Activated naive CD4-positive, alpha-beta T cell treated with anti-CD3 and anti-CD28 coated beads for 36 hours (primary cell): ENCODE measurements at regions of chr1 and their contacts with region 1.

Region 1: GRCh38 chr1:171485375-171486047 is at the start of gene PRRC2C:
- DNase-seq: peak; percentile 96
- H3K4me3 Mint-ChIP-seq: peak within 1 kb of the TSS; percentile 84
- H3K27ac Mint-ChIP-seq: peak within 1 kb of the TSS; percentile 94
- H3K4me1 Mint-ChIP-seq: peaks cover 39% of the 10 kb centered on the region
- H3K27me3 Mint-ChIP-seq: no peaks in the 10 kb centered on the region
- total RNA-seq, gene PRRC2C: 199 to 206 TPM

Region 2: GRCh38 chr1:169893494-169894362 is 1591.8 kb before region 1 on chr1 and contains the start of gene SCYL3:
- CTCF ChIA-PET with region 1: no interaction called
- intact Hi-C with region 1: loop called (anchors 1 kb)
- DNase-seq: peak; percentile 94
- H3K4me3 Mint-ChIP-seq: peak within 1 kb of the TSS; percentile 87
- H3K27ac Mint-ChIP-seq: peak within 1 kb of the TSS; percentile 100
- H3K4me1 Mint-ChIP-seq: peaks cover 34% of the 10 kb centered on the region
- H3K27me3 Mint-ChIP-seq: no peaks in the 10 kb centered on the region
- total RNA-seq, gene SCYL3: 8.8 TPM

Region 3: DNA sequence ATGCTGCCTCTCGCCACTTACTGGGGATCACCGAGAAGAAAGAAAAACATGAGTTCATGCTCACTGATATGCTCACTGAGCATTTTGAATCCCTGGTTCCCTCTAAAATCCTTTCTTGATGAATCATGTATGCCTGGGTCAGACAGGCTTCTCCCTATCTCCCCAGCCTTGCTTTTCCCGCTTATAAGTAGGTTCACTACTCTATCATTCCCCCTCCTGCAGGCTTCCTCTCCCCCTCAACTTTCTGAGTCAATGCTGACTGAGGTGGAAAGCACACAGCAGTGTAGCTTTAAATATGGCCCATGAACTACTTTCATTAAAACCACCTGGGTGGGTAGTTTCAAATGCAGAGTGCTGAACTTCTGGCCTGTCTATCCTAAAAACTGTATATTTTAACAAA is 129.8 kb before region 1 on chr1:
- CTCF ChIA-PET with region 1: no interaction called
- intact Hi-C with region 1: no loop called
- DNase-seq: no peak
- H3K4me3 Mint-ChIP-seq: no peak overlapping the region
- H3K27ac Mint-ChIP-seq: no peak overlapping the region
- H3K4me1 Mint-ChIP-seq: no peaks in the 10 kb centered on the region
- H3K27me3 Mint-ChIP-seq: peaks cover 10% of the 10 kb centered on the region

Region 4: GRCh38 chr1:171422511-171422910 is 63.0 kb before region 1 on chr1:
- CTCF ChIA-PET with region 1: no interaction called
- intact Hi-C with region 1: loop called (anchors 1 kb)
- DNase-seq: no peak
- H3K4me3 Mint-ChIP-seq: no peak overlapping the region
- H3K27ac Mint-ChIP-seq: no peak overlapping the region
- H3K4me1 Mint-ChIP-seq: peaks cover 25% of the 10 kb centered on the region
- H3K27me3 Mint-ChIP-seq: no peaks in the 10 kb centered on the region

Region 5: DNA sequence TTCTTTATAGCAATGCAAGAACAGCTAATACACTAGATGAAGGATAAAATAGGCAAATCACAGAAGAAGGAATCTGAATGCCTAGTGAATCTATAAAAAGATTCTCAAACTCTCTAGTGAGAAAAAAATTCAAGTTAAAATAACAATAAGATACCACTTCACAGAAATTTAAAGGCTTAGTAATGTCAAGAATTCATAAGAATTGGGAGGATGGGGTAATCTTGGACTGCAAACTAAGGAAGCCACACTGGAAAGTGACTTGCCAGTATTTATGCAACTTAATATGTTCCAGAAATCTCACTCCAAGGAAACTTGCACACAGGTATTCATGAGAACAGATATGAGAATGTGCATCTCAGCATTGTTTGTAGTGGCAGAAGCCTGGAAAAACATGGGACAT is 39.1 kb before region 1 on chr1:
- CTCF ChIA-PET with region 1: no interaction called
- intact Hi-C with region 1: no loop called
- DNase-seq: no peak
- H3K4me3 Mint-ChIP-seq: no peak overlapping the region
- H3K27ac Mint-ChIP-seq: no peak overlapping the region
- H3K4me1 Mint-ChIP-seq: no peaks in the 10 kb centered on the region
- H3K27me3 Mint-ChIP-seq: no peaks in the 10 kb centered on the region

Region 6: DNA sequence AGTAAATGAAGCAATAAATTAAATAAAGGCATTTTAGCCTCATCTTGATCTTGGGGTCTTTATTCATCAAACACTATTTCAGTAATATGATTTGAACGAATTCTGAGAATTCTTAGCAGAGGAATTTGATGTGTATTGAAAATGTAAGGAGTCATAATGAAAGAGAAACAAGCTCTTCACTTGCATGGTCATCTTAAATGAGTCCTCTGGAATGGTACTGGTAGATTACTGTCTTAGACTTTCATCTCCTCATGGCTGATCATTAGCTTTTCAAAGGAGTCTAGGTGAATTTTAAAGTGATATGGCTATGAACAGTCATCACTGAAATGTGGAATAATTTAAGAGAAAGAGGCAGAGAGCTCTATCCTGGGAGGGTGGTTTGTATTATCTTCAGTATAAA is 29.8 kb after region 1 on chr1:
- CTCF ChIA-PET with region 1: interaction called, 22 read pairs
- intact Hi-C with region 1: loop called (anchors 2 kb)
- DNase-seq: no peak
- H3K4me3 Mint-ChIP-seq: no peak overlapping the region
- H3K27ac Mint-ChIP-seq: no peak overlapping the region
- H3K4me1 Mint-ChIP-seq: peaks cover 36% of the 10 kb centered on the region
- H3K27me3 Mint-ChIP-seq: no peaks in the 10 kb centered on the region

Region 7: GRCh38 chr1:171644805-171645483 is 159.4 kb after region 1 on chr1:
- CTCF ChIA-PET with region 1: interaction called, 5 read pairs
- intact Hi-C with region 1: loop called (anchors 1 kb)
- DNase-seq: peak; percentile 87
- H3K4me3 Mint-ChIP-seq: no peak overlapping the region
- H3K27ac Mint-ChIP-seq: no peak overlapping the region
- H3K4me1 Mint-ChIP-seq: peaks cover 4% of the 10 kb centered on the region
- H3K27me3 Mint-ChIP-seq: no peaks in the 10 kb centered on the region

Region 8: DNA sequence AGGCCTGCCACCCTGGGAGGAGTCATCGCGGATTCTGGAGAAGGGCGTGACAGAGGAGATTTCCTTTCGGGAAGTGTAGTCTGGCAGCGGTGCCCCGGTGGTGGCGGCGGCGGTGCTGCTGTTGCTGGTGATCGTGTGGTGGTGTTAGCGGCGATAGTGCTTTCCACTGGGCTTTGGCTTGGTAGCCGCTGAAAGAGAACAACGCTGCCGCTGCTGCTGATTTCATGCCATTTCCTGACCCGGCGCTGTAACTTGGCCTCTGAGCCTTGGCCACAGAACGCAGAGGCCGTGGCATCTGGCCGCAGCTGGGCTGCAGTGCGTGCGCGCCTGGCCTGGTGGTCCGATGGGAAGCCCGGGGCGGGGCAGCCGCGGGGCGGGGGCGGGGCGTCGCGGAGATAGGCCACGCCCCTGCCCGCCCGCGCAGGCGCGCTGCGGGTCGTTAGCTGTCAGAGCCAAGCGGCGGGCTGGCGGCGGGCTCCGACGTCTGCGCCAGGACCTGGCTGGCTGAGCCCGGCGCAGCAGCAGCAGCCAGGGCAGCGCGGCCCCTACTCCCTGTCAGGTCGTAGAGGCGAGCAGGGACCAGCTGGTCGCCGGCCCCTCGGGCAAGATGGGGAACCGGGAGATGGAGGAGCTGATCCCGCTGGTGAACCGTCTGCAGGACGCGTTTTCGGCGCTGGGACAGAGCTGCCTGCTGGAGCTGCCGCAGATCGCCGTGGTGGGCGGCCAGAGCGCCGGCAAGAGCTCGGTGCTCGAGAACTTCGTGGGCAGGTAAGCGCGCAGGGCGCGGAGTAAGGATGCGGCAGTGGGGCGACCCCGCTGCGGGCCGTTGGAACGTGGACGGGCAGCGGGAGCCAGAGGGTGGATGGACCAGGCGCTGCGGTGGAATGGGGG is 355.8 kb after region 1 on chr1 and contains the start of gene DNM3:
- CTCF ChIA-PET with region 1: no interaction called
- intact Hi-C with region 1: loop called (anchors 1 kb)
- DNase-seq: peak; percentile 66
- H3K4me3 Mint-ChIP-seq: peak within 1 kb of the TSS; percentile 79
- H3K27ac Mint-ChIP-seq: no peak within 1 kb of the TSS
- H3K4me1 Mint-ChIP-seq: peaks cover 14% of the 10 kb centered on the region
- H3K27me3 Mint-ChIP-seq: peaks cover 13% of the 10 kb centered on the region
- total RNA-seq, gene DNM3: 0.96 to 0.98 TPM